ENCODE measurements at regions of chr2 and their contacts with region 1.

Region 1: GRCh38 chr2:227406177-227407031 is 18.7 kb upstream of the SCYGR1 start:
- DNase-seq: peak; percentile 42 to 65 (median 55)
- ATAC-seq: peak; percentile 89
- H3K4me3 ChIP-seq: no peak overlapping the region
- H3K27ac ChIP-seq: no peak overlapping the region
- H3K4me1 ChIP-seq: no peaks in the 10 kb centered on the region; a peak in 2 of 5 replicates
- H3K27me3 ChIP-seq: peaks cover 0 to 6% of the 10 kb centered on the region in 2 experiments; a peak in 3 of 5 replicates
- CTCF ChIP-seq: peak; percentile 63 to 84 (median 71)
- EP300 ChIP-seq: no peak
- POLR2A ChIP-seq: no peak
- RAD21 ChIP-seq: peak; percentile 84 to 91

Region 2: GRCh38 chr2:227125506-227125905 is 280.9 kb before region 1 on chr2:
- CTCF ChIA-PET with region 1: no interaction called
- POLR2A ChIA-PET with region 1: no interaction called
- in situ Hi-C with region 1: no loop called
- intact Hi-C with region 1: loop called (anchors 5 kb)
- DNase-seq: peak in 2 of 4 experiments; percentile 6 to 15
- ATAC-seq: peak; percentile 80
- H3K4me3 ChIP-seq: no peak overlapping the region
- H3K27ac ChIP-seq: no peak overlapping the region
- H3K4me1 ChIP-seq: no peaks in the 10 kb centered on the region
- H3K27me3 ChIP-seq: peaks cover 0 to 2% of the 10 kb centered on the region in 2 experiments; a peak in 1 of 5 replicates
- CTCF ChIP-seq: peak; percentile 26 to 37 (median 36); a peak in 4 of 6 replicates
- EP300 ChIP-seq: no peak
- POLR2A ChIP-seq: no peak
- RAD21 ChIP-seq: no peak

Region 3: GRCh38 chr2:227296671-227297405 is 109.6 kb before region 1 on chr2:
- CTCF ChIA-PET with region 1: no interaction called
- POLR2A ChIA-PET with region 1: no interaction called
- in situ Hi-C with region 1: no loop called
- intact Hi-C with region 1: no loop called
- DNase-seq: no peak
- ATAC-seq: no peak
- H3K4me3 ChIP-seq: no peak overlapping the region
- H3K27ac ChIP-seq: no peak overlapping the region
- H3K4me1 ChIP-seq: no peaks in the 10 kb centered on the region
- H3K27me3 ChIP-seq: no peaks in the 10 kb centered on the region
- CTCF ChIP-seq: no peak
- EP300 ChIP-seq: no peak
- POLR2A ChIP-seq: no peak
- RAD21 ChIP-seq: no peak

Region 4: GRCh38 chr2:227416701-227417100 is 10.3 kb after region 1 on chr2:
- CTCF ChIA-PET with region 1: no interaction called
- POLR2A ChIA-PET with region 1: no interaction called
- in situ Hi-C with region 1: no loop called
- intact Hi-C with region 1: no loop called
- DNase-seq: no peak
- ATAC-seq: no peak
- H3K4me3 ChIP-seq: no peak overlapping the region
- H3K27ac ChIP-seq: no peak overlapping the region
- H3K4me1 ChIP-seq: no peaks in the 10 kb centered on the region; a peak in 1 of 5 replicates
- H3K27me3 ChIP-seq: no peaks in the 10 kb centered on the region
- CTCF ChIP-seq: no peak
- EP300 ChIP-seq: no peak
- POLR2A ChIP-seq: no peak
- RAD21 ChIP-seq: no peak

Region 5: DNA sequence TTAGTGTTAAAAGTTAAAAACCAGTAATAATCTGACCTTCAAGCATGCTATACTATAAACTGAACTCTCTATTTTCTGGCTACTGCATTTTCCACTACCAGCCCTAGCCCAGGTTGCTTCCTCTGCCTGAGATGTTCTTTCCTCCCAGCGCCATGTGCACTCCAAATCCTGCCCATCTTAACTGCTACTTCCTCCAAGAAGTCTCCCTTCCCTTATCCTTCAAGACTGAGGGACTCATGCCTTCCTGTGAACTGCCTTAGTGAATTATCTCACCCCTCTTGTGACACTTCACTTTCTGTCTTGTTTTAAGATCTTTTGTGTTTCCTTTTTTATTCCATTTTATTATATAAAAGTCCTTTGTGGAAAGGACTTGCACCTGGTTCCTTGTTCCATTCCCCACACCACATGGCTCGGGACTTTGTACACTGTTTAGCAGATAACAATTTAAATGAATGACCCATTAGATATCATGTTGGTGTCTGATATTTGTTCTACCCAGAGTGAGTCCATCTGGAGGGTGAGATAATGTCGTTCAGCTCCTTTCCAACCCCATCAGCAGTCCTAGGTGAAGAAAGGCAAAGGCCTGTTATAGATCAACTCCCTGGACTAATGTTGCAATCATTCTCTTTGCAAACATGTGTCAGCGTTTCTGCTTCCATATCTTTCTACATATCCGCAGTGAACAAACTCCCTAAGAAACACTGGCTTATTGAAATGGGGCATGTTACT is 44.7 kb after region 1 on chr2:
- CTCF ChIA-PET with region 1: no interaction called
- POLR2A ChIA-PET with region 1: no interaction called
- in situ Hi-C with region 1: no loop called
- intact Hi-C with region 1: loop called (anchors 5 kb)
- DNase-seq: peak; percentile 81 to 93 (median 86)
- ATAC-seq: peak; percentile 94
- H3K4me3 ChIP-seq: no peak overlapping the region
- H3K27ac ChIP-seq: peak overlapping the region; percentile 86
- H3K4me1 ChIP-seq: peaks cover 4 to 26% of the 10 kb centered on the region in 2 experiments; a peak in 3 of 5 replicates
- H3K27me3 ChIP-seq: no peaks in the 10 kb centered on the region
- CTCF ChIP-seq: no peak
- EP300 ChIP-seq: peak; percentile 96
- POLR2A ChIP-seq: no peak
- RAD21 ChIP-seq: no peak

Region 6: GRCh38 chr2:227464361-227464760 is 58.0 kb after region 1 on chr2:
- CTCF ChIA-PET with region 1: no interaction called
- POLR2A ChIA-PET with region 1: interaction called, 3 read pairs
- in situ Hi-C with region 1: loop called (anchors 5 kb)
- intact Hi-C with region 1: loop called (anchors 2 kb)
- DNase-seq: no peak
- ATAC-seq: no peak
- H3K4me3 ChIP-seq: no peak overlapping the region
- H3K27ac ChIP-seq: no peak overlapping the region
- H3K4me1 ChIP-seq: peaks cover 25 to 29% of the 10 kb centered on the region in 2 experiments
- H3K27me3 ChIP-seq: no peaks in the 10 kb centered on the region
- CTCF ChIP-seq: no peak
- EP300 ChIP-seq: no peak
- POLR2A ChIP-seq: no peak
- RAD21 ChIP-seq: no peak

Region 7: GRCh38 chr2:227479865-227480475 is 73.6 kb after region 1 on chr2:
- CTCF ChIA-PET with region 1: interaction called, 5 read pairs
- POLR2A ChIA-PET with region 1: no interaction called
- in situ Hi-C with region 1: no loop called
- intact Hi-C with region 1: loop called (anchors 2 kb)
- DNase-seq: peak; percentile 30 to 36 (median 32)
- ATAC-seq: peak; percentile 89
- H3K4me3 ChIP-seq: no peak overlapping the region
- H3K27ac ChIP-seq: no peak overlapping the region
- H3K4me1 ChIP-seq: peaks cover 2 to 3% of the 10 kb centered on the region in 2 experiments; a peak in 2 of 5 replicates
- H3K27me3 ChIP-seq: no peaks in the 10 kb centered on the region
- CTCF ChIP-seq: peak in 2 of 3 experiments; percentile 22 to 57; a peak in 3 of 6 replicates
- EP300 ChIP-seq: no peak
- POLR2A ChIP-seq: no peak
- RAD21 ChIP-seq: peak in 1 of 2 experiments; percentile 59; a peak in 3 of 4 replicates

Region 8: GRCh38 chr2:227655454-227655853 is 249.1 kb after region 1 on chr2:
- CTCF ChIA-PET with region 1: no interaction called
- POLR2A ChIA-PET with region 1: interaction called, 3 read pairs
- in situ Hi-C with region 1: no loop called
- intact Hi-C with region 1: loop called (anchors 5 kb)
- DNase-seq: peak in 3 of 4 experiments; percentile 2 to 6 (median 5)
- ATAC-seq: no peak
- H3K4me3 ChIP-seq: no peak overlapping the region
- H3K27ac ChIP-seq: no peak overlapping the region
- H3K4me1 ChIP-seq: no peaks in the 10 kb centered on the region
- H3K27me3 ChIP-seq: no peaks in the 10 kb centered on the region
- CTCF ChIP-seq: no peak
- EP300 ChIP-seq: no peak
- POLR2A ChIP-seq: no peak
- RAD21 ChIP-seq: no peak

Region 9: DNA sequence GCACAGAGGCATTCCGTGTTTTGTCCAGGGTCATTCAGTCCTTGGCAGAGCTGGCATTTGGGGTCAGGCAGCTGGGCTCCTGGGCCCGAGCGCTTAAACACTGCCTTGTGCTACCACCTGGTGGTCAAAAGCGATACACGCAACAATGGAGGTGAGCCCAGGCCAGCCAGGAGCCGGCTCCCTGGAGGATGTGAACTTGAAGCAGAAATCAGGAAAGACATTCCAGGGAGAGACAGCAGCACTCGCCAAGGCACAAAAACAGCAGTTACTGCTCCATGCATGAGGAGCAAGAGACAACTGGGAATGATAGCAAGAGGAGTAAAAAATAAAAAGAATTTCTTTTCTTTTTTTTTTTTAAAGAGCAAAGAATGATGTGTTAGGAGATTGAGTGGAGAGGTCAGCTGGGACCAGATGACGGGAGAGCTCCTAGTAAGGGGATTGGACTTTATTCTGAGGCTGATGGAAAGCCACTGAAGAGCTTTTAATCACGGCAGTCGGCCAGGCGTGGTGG is 360.0 kb after region 1 on chr2:
- CTCF ChIA-PET with region 1: interaction called, 10 read pairs
- POLR2A ChIA-PET with region 1: no interaction called
- in situ Hi-C with region 1: loop called (anchors 10 kb)
- intact Hi-C with region 1: loop called (anchors 1 kb)
- DNase-seq: peak; percentile 57 to 64 (median 59)
- ATAC-seq: peak; percentile 98
- H3K4me3 ChIP-seq: no peak overlapping the region
- H3K27ac ChIP-seq: no peak overlapping the region
- H3K4me1 ChIP-seq: peaks cover 0 to 4% of the 10 kb centered on the region in 2 experiments; a peak in 1 of 5 replicates
- H3K27me3 ChIP-seq: peaks cover 0 to 10% of the 10 kb centered on the region in 2 experiments; a peak in 2 of 5 replicates
- CTCF ChIP-seq: peak; percentile 62 to 75 (median 66)
- EP300 ChIP-seq: no peak
- POLR2A ChIP-seq: no peak
- RAD21 ChIP-seq: peak; percentile 80 to 82